ENCODE measurements at regions of chr19 and their contacts with region 1.

Region 1: DNA sequence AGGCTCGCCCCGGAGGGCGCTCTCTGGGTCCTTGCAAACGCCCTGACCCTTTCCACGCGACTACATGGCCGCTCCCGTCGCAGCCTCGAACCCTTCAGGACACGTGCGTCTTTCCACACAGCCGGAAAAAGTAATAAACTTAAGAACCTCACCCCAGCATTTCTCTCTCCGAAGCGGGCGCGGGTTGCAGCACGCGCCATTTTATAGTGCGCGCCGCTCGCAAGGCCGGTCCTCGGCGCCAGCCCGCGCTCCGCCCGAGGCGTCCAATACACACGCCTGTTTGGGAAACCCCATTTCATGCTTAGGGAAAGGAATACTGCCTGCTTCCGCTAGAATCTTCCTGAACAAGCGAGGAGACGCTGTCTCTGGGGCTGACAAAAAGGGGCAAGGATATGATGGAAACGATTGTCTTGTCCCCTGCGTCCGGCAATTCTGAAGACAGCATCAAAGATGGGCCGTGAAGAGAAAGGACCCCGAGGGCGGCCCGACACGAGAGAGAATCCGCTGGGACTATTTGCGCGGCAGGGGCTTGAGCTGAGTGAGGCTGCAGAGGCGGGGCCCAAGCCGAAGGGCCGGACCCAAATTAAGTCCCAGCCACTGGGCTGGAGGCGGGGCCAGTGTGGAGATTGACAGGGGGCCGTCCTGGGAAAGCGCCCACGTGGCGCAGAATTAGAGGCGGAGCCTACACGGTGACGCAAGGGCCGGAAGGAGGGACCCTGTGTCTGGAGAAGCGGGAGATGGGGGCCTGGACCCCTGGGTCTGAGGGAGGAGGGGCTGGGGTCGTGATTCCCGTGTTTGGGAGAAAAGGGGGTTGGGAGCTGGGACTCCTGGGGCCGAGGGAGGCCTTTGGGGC is 14.4 kb downstream of the ACP4 start:
- DNase-seq: peak; percentile 98
- H3K4me3 Mint-ChIP-seq: peak overlapping the region; percentile 97
- H3K27ac Mint-ChIP-seq: peak overlapping the region; percentile 96
- H3K4me1 Mint-ChIP-seq: peaks cover 18% of the 10 kb centered on the region
- H3K27me3 Mint-ChIP-seq: no peaks in the 10 kb centered on the region

Region 2: DNA sequence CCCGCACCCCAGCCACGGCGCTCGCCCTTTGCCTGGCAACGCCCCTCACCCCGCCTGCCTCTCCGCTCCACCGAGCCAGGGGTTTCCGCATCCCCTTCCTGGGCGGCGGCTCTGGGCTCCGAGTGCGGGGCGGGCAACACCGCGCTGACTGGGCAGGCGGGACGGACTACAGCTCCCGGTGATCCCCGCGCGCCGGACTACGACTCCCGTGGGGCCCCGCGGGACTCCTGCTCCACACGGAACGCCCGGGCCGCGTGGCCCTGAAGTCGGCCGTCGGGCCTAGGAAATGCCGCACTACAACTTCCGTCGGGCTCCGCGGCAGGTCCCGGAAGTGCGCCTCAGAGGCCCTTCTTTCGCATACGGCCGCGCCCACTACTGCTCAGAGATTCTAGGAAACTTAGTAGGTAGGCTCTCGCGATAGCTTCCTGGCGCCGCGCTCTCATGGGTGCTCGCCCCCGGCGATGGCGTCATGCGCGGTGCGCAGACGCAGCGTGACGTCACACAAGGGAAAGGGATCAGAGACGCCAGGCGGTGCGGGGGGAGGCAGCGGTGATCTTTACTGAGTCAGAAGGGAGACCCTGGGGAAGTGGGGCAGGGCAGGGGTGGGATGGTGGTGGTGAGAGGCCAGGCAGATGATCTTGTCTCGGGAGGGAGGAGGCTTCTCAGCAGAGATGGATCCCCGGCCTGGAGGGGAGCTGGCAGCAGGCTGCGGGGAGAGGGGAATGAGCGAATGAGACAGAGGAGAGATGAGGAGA is 293.4 kb before region 1 on chr19 and contains the start of gene JOSD2:
- intact Hi-C with region 1: loop called (anchors 10 kb)
- DNase-seq: peak; percentile 97
- H3K4me3 Mint-ChIP-seq: peak within 1 kb of the TSS; percentile 90
- H3K27ac Mint-ChIP-seq: peak within 1 kb of the TSS; percentile 97
- H3K4me1 Mint-ChIP-seq: peaks cover 9% of the 10 kb centered on the region
- H3K27me3 Mint-ChIP-seq: no peaks in the 10 kb centered on the region
- total RNA-seq, gene JOSD2: 39.9 and 43.6 TPM in 2 replicates

Region 3: DNA sequence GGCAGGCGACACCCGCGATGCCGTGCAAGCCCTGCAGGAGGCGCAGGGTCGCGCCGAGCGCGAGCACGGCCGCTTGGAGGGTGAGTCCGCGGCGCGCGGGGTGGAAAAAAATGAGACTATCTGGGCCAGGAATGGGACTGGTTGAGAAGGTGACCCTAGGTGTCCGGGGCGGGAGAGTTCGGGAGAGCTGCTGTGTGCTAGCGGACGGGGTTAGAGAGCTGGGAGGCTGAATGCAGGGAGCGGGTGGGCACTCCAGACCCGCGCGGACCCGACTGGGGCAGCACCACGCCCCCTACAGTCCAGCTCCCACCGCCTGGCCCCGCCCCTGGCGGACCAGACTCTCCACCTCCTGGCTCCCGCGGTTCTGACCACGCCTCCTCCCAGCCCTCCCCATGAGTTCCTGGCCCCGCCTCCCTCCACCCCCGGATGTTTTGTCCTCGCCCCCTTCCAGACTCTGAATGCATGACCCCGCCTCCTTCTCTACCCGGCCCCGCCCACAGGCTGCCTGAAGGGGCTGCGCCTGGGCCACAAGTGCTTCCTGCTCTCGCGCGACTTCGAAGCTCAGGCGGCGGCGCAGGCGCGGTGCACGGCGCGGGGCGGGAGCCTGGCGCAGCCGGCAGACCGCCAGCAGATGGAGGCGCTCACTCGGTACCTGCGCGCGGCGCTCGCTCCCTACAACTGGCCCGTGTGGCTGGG is 80.0 kb before region 1 on chr19:
- intact Hi-C with region 1: loop called (anchors 2 kb)
- DNase-seq: peak; percentile 98
- H3K4me3 Mint-ChIP-seq: peak overlapping the region; percentile 86
- H3K27ac Mint-ChIP-seq: peak overlapping the region; percentile 77
- H3K4me1 Mint-ChIP-seq: peaks cover 20% of the 10 kb centered on the region
- H3K27me3 Mint-ChIP-seq: peaks cover 39% of the 10 kb centered on the region

Region 4: DNA sequence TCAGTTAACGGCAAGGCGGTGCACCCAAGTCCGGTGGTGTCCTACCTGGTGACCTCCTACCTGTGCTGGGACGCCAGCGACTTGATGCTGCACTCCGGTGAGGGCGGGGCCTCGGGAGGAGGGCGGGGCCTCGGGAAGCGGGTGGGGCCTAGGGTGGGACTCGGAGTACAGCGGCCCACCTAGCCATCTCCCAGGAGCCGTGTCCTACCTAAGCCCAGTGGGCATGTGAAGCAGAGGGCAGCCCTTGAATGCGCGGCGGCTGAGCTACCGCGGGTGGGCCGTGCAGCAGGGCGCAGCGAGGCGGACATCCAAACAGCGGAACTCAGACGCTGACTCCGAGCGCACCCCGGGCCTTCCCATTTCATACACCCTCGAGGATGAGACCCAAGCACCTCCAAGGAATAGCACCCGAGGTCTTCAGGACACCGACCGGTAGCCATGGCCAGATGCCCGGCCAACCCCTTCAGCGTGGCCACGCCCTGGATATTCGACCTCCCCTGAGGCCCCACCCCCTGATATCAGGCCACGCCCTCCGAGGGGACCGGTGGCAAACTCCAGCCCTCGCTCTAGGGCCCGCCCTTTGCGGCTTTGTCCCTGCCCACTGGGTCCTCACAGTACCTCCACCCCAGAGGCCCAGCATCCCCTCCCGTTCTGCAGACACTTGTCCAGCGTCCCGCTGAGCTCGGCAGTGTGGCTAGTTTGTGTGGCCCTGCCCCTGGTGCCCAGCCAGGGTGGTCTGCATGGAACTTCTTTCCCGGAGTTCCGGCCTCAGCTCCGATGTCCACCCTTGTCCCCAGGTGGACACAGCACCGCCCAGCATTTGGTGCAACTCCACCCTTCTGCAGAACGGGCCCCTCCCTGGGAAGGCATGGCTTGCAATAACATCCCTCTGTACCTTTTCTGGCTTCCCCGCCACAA is 13.6 kb after region 1 on chr19:
- intact Hi-C with region 1: loop called (anchors 1 kb)
- DNase-seq: peak; percentile 61
- H3K4me3 Mint-ChIP-seq: peak overlapping the region; percentile 86
- H3K27ac Mint-ChIP-seq: peak overlapping the region; percentile 91
- H3K4me1 Mint-ChIP-seq: peaks cover 32% of the 10 kb centered on the region
- H3K27me3 Mint-ChIP-seq: peaks cover 32% of the 10 kb centered on the region

Region 5: GRCh38 chr19:50835785-50836542 is 31.3 kb after region 1 on chr19:
- intact Hi-C with region 1: loop called (anchors 1 kb)
- DNase-seq: peak; percentile 75
- H3K4me3 Mint-ChIP-seq: peak overlapping the region; percentile 79
- H3K27ac Mint-ChIP-seq: peak overlapping the region; percentile 51
- H3K4me1 Mint-ChIP-seq: peaks cover 11% of the 10 kb centered on the region
- H3K27me3 Mint-ChIP-seq: peaks cover 30% of the 10 kb centered on the region

Region 6: GRCh38 chr19:51016798-51017683 is 212.4 kb after region 1 on chr19:
- intact Hi-C with region 1: no loop called
- DNase-seq: no peak
- H3K4me3 Mint-ChIP-seq: no peak overlapping the region
- H3K27ac Mint-ChIP-seq: no peak overlapping the region
- H3K4me1 Mint-ChIP-seq: peaks cover 12% of the 10 kb centered on the region
- H3K27me3 Mint-ChIP-seq: peaks cover 43% of the 10 kb centered on the region

Region 7: DNA sequence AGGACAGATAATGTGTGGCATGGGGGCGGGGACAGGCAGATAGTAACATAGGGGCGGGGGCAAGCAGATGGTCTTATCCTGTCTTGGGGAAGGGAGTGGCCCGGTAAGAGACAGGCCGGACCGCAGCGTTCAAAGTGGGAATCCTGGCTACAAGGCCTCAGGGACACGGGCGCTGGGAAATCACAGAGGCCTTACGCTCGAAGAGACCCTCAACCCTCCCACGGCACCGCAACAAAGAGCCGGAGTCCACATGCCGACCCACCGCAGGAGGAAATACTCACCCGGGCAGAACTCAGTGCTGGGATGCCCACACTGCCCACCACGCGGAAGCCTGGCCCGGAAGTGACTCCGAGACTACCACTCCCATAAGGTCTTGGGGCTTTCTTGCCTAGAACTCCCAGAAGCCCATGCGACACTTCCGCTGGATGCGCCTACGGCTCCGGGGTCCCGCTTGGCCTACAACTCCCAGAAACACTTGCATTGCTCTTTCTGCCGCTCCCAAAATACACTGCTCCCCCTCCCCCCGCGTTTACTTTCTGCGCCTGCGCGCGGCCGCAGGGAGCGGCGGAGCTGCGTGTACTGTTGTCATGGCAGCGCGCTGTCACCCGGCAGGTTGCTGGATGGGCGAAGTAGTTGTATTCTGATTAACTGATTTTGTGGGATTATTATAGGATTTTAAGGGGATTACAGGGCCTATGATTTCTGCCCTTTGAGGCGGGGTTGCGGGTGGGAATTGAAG is 303.6 kb after region 1 on chr19 and contains the start of gene CTU1:
- intact Hi-C with region 1: loop called (anchors 1 kb)
- DNase-seq: peak; percentile 99
- H3K4me3 Mint-ChIP-seq: peak within 1 kb of the TSS; percentile 84
- H3K27ac Mint-ChIP-seq: peak within 1 kb of the TSS; percentile 82
- H3K4me1 Mint-ChIP-seq: peaks cover 19% of the 10 kb centered on the region
- H3K27me3 Mint-ChIP-seq: no peaks in the 10 kb centered on the region
- total RNA-seq, gene CTU1: 9.7 and 11.0 TPM in 2 replicates

Measured in activated T-helper 2 cell treated with anti-CD3 and anti-CD28 coated beads, Interferon-gamma antibody, Interleukin-2, Interleukin-4, amounts not matched to agents 10 μg/mL and 5 μg/mL and 100 μg/mL, durations not matched to agents 14 hours and 24 hours and 36 hours (primary cell).